AG04449 (cell line): ENCODE measurements at regions of chr6 and their contacts with region 1.

Region 1: GRCh38 chr6:47168183-47168582 is 126.1 kb upstream of the ADGRF1 start:
- DNase-seq: peak; percentile 87
- H3K4me3 ChIP-seq: no peak overlapping the region
- CTCF ChIP-seq: no peak

Region 2: DNA sequence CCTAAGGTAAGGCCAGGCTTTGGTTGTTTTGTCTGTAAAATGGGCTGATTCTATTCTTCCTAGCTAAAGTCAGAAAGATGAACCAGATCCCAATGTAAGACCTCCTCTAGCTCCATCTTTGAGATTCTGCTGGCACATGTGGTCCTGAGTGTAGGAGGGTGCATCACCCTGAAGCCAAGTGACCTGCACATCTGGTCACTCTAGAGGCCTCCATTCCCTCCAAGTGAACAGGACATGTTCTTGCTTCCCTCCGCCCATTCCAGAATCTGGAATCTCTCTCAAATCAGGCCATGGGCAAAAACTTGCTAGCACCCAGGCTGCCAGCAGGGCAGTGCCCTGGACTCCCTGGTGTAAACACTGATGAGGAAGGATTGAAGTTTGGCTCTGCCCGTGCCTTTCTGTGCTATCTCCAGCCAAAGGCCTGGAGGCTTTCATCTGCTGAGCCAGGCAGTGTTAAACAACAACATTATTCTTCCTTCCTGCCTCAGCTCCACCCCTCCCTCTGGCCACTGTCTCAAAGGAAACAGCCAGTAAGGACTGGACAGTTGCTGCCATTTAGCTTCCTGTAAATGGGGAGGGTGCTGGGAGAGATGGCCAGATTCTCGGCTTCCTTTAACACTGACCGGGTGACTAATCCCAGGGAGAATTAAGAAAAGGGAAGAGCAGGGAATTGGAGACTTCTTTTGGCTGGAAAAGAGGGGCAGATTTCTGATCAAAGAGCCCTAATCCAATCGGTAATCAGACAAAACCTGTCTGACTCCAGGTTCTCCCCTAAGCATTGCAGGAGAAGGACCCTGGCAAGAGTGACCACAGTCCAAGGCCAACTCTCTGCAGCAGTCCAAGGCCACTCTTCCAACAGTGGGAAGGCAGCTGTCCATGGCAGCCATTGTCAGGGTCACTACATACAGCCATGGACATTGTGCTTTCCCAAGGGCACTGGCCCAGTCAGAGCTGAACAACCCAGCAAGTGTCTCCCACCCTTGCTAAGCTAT is 106.6 kb before region 1 on chr6:
- CTCF ChIA-PET with region 1: no interaction called
- POLR2A ChIA-PET with region 1: no interaction called
- DNase-seq: no peak
- H3K4me3 ChIP-seq: no peak overlapping the region
- CTCF ChIP-seq: no peak

Region 3: DNA sequence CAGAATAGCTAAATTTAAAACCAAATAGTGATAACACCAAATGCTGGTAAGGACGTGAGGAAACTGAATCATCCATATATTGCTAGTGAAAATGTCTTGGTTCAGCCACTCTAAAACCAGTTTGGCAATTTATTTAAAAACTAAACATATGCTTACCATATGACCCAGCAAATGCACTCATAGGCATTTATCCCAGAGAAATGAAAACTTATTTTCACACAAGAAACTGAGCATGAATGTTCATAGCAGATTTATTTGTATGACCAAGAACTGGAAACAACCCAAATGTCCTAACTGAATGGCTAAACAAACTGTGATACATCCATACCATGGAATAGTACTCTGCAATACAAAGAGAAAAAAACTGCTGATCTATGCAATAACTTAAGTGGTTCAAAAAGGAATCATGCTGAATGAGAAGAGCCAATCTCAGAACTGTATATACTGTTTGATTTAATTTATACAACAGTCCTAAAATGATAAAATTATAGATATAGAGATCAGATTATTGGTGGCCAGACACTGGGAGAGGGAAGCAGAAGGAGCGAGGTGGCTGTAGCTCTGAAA is 10.4 kb before region 1 on chr6:
- CTCF ChIA-PET with region 1: interaction called, 10 read pairs
- POLR2A ChIA-PET with region 1: no interaction called
- DNase-seq: no peak
- H3K4me3 ChIP-seq: no peak overlapping the region
- CTCF ChIP-seq: no peak

Region 4: GRCh38 chr6:47195011-47195650 is 26.9 kb after region 1 on chr6:
- CTCF ChIA-PET with region 1: no interaction called
- POLR2A ChIA-PET with region 1: no interaction called
- DNase-seq: no peak
- H3K4me3 ChIP-seq: no peak overlapping the region
- CTCF ChIP-seq: no peak